ENCODE measurements at regions of chr7 and their contacts with region 1.

Region 1: GRCh38 chr7:37352974-37353948 is 95.4 kb downstream of the ELMO1 start:
- DNase-seq: peak; percentile 83
- H3K4me3 Mint-ChIP-seq: peak overlapping the region; percentile 92
- H3K27ac Mint-ChIP-seq: peak overlapping the region; percentile 99
- H3K4me1 Mint-ChIP-seq: peaks cover 86% of the 10 kb centered on the region
- H3K27me3 Mint-ChIP-seq: no peaks in the 10 kb centered on the region

Region 2: DNA sequence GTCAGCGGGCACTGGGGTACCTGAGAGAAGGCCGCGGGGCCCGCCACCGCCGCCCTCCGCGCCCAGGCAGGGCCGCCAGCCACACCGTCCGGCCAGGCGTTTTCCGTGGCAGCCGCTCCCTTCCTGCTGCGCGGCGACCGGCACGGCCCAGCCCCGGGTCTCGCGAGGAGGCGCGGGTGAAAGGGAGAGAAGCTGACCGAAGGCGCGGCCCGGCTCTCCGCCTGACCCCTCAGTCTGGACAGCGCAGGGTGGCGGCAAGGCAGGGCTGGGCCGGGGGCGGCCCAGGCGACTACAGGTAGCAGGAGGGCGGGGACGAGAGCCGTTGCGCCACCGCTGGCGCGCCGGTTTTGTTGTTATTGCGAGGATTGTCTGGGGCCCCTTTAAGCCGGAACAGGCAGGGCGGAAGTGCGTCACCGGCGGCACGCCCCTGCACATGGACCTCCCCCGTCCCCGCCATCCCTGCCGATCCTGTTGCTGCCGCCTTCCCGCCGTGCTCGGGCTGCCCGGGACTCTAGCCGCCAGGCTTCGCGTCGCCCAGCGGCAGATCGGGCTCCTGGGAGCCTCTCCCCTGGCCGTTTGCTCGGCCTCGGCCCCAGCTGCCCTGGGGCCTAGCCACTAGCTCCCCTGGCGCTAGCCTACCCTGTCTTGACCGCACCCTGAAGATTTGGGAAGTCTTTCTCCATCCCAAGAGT is 1658.3 kb before region 1 on chr7 and contains the start of gene HERPUD2:
- CTCF ChIA-PET with region 1: no interaction called
- POLR2A ChIA-PET with region 1: no interaction called
- intact Hi-C with region 1: loop called (anchors 10 kb)
- DNase-seq: peak; percentile 95
- H3K4me3 Mint-ChIP-seq: peak within 1 kb of the TSS; percentile 93
- H3K27ac Mint-ChIP-seq: peak within 1 kb of the TSS; percentile 98
- H3K4me1 Mint-ChIP-seq: peaks cover 45% of the 10 kb centered on the region
- H3K27me3 Mint-ChIP-seq: no peaks in the 10 kb centered on the region
- total RNA-seq, gene HERPUD2: 26.2 to 29.6 TPM

Region 3: GRCh38 chr7:37208528-37208927 is 144.7 kb before region 1 on chr7:
- CTCF ChIA-PET with region 1: interaction called, 24 read pairs
- POLR2A ChIA-PET with region 1: no interaction called
- intact Hi-C with region 1: loop called (anchors 1 kb)
- DNase-seq: peak; percentile 36
- H3K4me3 Mint-ChIP-seq: no peak overlapping the region
- H3K27ac Mint-ChIP-seq: peak overlapping the region; percentile 44
- H3K4me1 Mint-ChIP-seq: peaks cover 18% of the 10 kb centered on the region
- H3K27me3 Mint-ChIP-seq: no peaks in the 10 kb centered on the region

Region 4: GRCh38 chr7:37311355-37311754 is 41.9 kb before region 1 on chr7:
- CTCF ChIA-PET with region 1: interaction called, 5 read pairs
- POLR2A ChIA-PET with region 1: interaction called, 3 read pairs
- intact Hi-C with region 1: loop called (anchors 1 kb)
- DNase-seq: peak; percentile 62
- H3K4me3 Mint-ChIP-seq: peak overlapping the region; percentile 1
- H3K27ac Mint-ChIP-seq: peak overlapping the region; percentile 70
- H3K4me1 Mint-ChIP-seq: peaks cover 65% of the 10 kb centered on the region
- H3K27me3 Mint-ChIP-seq: no peaks in the 10 kb centered on the region

Region 5: DNA sequence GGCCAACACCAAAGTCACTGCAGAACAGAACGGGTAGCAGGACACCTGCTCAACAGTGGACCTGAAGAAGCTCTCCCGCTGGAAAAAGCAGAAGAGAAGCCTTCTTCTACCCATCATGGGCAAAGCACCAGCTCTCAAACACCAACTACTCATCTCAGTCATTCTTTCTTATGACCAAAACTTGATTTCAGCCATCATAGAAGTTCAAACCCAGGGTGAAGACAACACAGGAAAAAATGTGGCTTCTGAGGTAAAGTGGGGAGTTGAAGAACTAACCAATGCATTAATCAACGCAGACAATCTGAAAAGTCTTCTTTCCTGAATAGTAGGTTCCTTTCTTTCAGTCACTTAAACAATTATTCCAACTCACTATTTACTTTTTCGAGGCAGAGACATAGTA is 12.1 kb after region 1 on chr7:
- CTCF ChIA-PET with region 1: interaction called, 8 read pairs
- POLR2A ChIA-PET with region 1: interaction called, 13 read pairs
- intact Hi-C with region 1: loop called (anchors 1 kb)
- DNase-seq: no peak
- H3K4me3 Mint-ChIP-seq: no peak overlapping the region
- H3K27ac Mint-ChIP-seq: peak overlapping the region; percentile 98
- H3K4me1 Mint-ChIP-seq: peaks cover 86% of the 10 kb centered on the region
- H3K27me3 Mint-ChIP-seq: no peaks in the 10 kb centered on the region

Region 6: DNA sequence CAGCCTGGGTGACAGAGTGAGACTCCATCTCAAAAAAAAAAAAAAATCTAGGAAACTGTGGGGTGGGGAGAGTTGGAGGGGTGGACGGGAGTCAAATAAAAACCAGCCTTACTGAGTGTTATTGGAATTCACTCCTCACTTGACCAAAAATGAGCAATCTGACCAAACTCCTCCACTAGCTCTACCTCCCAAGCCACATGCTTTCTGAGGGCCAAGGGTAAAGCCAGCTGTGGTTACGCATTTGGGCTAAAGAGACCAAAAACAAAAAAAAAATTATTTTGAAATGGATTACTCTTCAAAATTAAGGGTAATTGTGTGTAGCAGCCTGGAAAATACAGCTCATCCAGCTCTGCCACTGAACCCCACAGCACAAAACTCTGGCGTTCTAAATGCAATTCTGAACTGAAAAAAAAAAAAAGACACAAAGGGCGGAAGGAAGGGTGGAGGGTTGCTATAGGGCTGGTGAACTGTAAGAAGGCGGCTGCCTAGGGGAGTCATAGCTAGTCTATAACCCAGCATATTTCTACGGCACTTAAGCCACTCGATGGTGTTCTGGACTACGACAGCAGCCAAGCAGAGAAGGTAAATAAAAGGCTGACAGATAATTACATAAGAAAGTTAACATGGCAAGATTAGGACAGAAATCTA is 87.6 kb after region 1 on chr7:
- CTCF ChIA-PET with region 1: interaction called, 15 read pairs
- POLR2A ChIA-PET with region 1: interaction called, 55 read pairs
- intact Hi-C with region 1: loop called (anchors 1 kb)
- DNase-seq: peak; percentile 60
- H3K4me3 Mint-ChIP-seq: peak overlapping the region; percentile 45
- H3K27ac Mint-ChIP-seq: peak overlapping the region; percentile 91
- H3K4me1 Mint-ChIP-seq: peaks cover 89% of the 10 kb centered on the region
- H3K27me3 Mint-ChIP-seq: no peaks in the 10 kb centered on the region

Region 7: GRCh38 chr7:37467002-37467401 is 113.7 kb after region 1 on chr7:
- CTCF ChIA-PET with region 1: no interaction called
- POLR2A ChIA-PET with region 1: no interaction called
- intact Hi-C with region 1: no loop called
- DNase-seq: no peak
- H3K4me3 Mint-ChIP-seq: no peak overlapping the region
- H3K27ac Mint-ChIP-seq: no peak overlapping the region
- H3K4me1 Mint-ChIP-seq: peaks cover 6% of the 10 kb centered on the region
- H3K27me3 Mint-ChIP-seq: peaks cover 4% of the 10 kb centered on the region

Measured in activated CD4-positive, alpha-beta memory T cell treated with anti-CD3 and anti-CD28 coated beads for 36 hours (primary cell).